Mammary epithelial cell (primary cell): ENCODE measurements at regions of chr9 and their contacts with region 1.

Region 1: GRCh38 chr9:126428534-126429175 is 102.0 kb downstream of the MVB12B start:
- DNase-seq: no peak
- H3K4me3 ChIP-seq: no peak overlapping the region
- H3K27ac ChIP-seq: no peak overlapping the region
- H3K4me1 ChIP-seq: no peaks in the 10 kb centered on the region
- H3K27me3 ChIP-seq: no peaks in the 10 kb centered on the region
- CTCF ChIP-seq: no peak

Region 2: GRCh38 chr9:126471084-126471624 is 42.5 kb after region 1 on chr9:
- CTCF ChIA-PET with region 1: no interaction called
- dilution Hi-C with region 1: loop called (anchors 5 kb)
- in situ Hi-C with region 1: no loop called
- intact Hi-C with region 1: no loop called
- DNase-seq: no peak
- H3K4me3 ChIP-seq: no peak overlapping the region
- H3K27ac ChIP-seq: no peak overlapping the region
- H3K4me1 ChIP-seq: no peaks in the 10 kb centered on the region
- H3K27me3 ChIP-seq: no peaks in the 10 kb centered on the region
- CTCF ChIP-seq: no peak

Region 3: GRCh38 chr9:126534431-126535186 is 106.0 kb after region 1 on chr9:
- CTCF ChIA-PET with region 1: no interaction called
- dilution Hi-C with region 1: loop called (anchors 5 kb)
- in situ Hi-C with region 1: no loop called
- intact Hi-C with region 1: no loop called
- DNase-seq: no peak
- H3K4me3 ChIP-seq: no peak overlapping the region
- H3K27ac ChIP-seq: no peak overlapping the region
- H3K4me1 ChIP-seq: no peaks in the 10 kb centered on the region
- H3K27me3 ChIP-seq: peaks cover 2% of the 10 kb centered on the region
- CTCF ChIP-seq: no peak